K562 (cell line): ENCODE measurements at regions of chr12 and their contacts with region 1.

Region 1: GRCh38 chr12:75480469-75480949 is at the start of gene GLIPR1:
- DNase-seq: peak in 2 of 4 experiments; percentile 13 to 24
- ATAC-seq: peak; percentile 73
- H3K4me3 ChIP-seq: no peak within 1 kb of the TSS
- H3K27ac ChIP-seq: peak within 1 kb of the TSS; percentile 61; the same call in 2 of the 3 replicates
- H3K4me1 ChIP-seq: peaks cover 0 to 6% of the 10 kb centered on the region in 2 experiments; a peak in 4 of 5 replicates
- H3K27me3 ChIP-seq: no peaks in the 10 kb centered on the region
- CTCF ChIP-seq: no peak
- EP300 ChIP-seq: no peak
- POLR2A ChIP-seq: no peak
- RAD21 ChIP-seq: no peak
- polyA plus RNA-seq, gene GLIPR1: 2.0 to 2.1 TPM

Region 2: GRCh38 chr12:75334384-75335030 is 146.0 kb before region 1 on chr12 and contains the start of gene GLIPR1L1:
- CTCF ChIA-PET with region 1: no interaction called
- POLR2A ChIA-PET with region 1: no interaction called
- in situ Hi-C with region 1: loop called (anchors 10 kb)
- intact Hi-C with region 1: loop called (anchors 5 kb)
- DNase-seq: peak; percentile 26 to 79 (median 32)
- ATAC-seq: peak; percentile 77
- H3K4me3 ChIP-seq: no peak within 1 kb of the TSS
- H3K27ac ChIP-seq: no peak within 1 kb of the TSS
- H3K4me1 ChIP-seq: peaks cover 0 to 10% of the 10 kb centered on the region in 2 experiments; a peak in 2 of 5 replicates
- H3K27me3 ChIP-seq: no peaks in the 10 kb centered on the region
- CTCF ChIP-seq: peak; percentile 72 to 81 (median 76)
- EP300 ChIP-seq: no peak
- POLR2A ChIP-seq: no peak
- RAD21 ChIP-seq: peak; percentile 47 to 69
- polyA plus RNA-seq, gene GLIPR1L1: not detected

Region 3: GRCh38 chr12:75571204-75571603 is 90.7 kb after region 1 on chr12:
- CTCF ChIA-PET with region 1: no interaction called
- POLR2A ChIA-PET with region 1: no interaction called
- in situ Hi-C with region 1: no loop called
- intact Hi-C with region 1: no loop called
- DNase-seq: no peak
- ATAC-seq: no peak
- H3K4me3 ChIP-seq: no peak overlapping the region
- H3K27ac ChIP-seq: no peak overlapping the region
- H3K4me1 ChIP-seq: no peaks in the 10 kb centered on the region
- H3K27me3 ChIP-seq: no peaks in the 10 kb centered on the region
- CTCF ChIP-seq: no peak
- EP300 ChIP-seq: no peak
- POLR2A ChIP-seq: no peak
- RAD21 ChIP-seq: no peak

Region 4: DNA sequence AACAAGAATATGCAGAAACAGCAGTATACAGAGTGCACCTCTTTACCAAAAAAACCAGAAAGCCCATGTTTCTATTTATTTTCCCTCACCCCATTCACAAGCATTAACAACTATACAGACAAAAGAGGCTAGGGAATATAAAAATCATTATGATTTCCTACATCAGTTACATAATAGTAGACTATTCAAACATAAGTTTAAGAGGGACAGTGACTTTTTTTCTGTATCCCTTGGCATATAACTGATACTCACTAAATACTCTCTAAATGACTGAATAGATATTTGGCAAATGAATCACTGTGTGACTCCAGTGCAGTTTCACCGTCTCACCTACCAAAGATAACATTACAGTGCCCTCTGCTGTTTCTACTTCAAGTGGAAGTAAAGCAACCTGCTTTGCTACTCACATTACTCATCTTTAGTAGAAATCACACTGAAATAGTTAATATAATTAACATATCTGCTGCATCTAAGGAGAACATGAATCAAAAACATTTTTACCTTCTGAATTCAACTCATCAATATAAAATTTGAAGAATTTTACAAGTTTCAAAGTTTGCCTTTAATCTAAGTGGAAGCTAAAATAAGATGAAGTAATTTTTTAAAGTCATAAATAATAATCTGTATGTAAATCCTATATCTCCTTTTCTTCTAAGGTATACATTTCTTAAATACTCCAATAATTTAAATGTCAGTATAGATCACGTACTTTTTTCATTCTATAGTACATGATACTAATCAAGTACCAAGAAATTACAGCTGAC is 975.3 kb after region 1 on chr12:
- CTCF ChIA-PET with region 1: no interaction called
- POLR2A ChIA-PET with region 1: no interaction called
- in situ Hi-C with region 1: no loop called
- intact Hi-C with region 1: loop called (anchors 10 kb)
- DNase-seq: peak; percentile 14 to 66 (median 18)
- ATAC-seq: peak; percentile 94
- H3K4me3 ChIP-seq: no peak overlapping the region
- H3K27ac ChIP-seq: no peak overlapping the region
- H3K4me1 ChIP-seq: no peaks in the 10 kb centered on the region
- H3K27me3 ChIP-seq: no peaks in the 10 kb centered on the region
- CTCF ChIP-seq: peak; percentile 34 to 72 (median 51); a peak in 5 of 6 replicates
- EP300 ChIP-seq: no peak
- POLR2A ChIP-seq: 0 out of 2 replicates have a peak, but pooled peaks have one; percentile 27
- RAD21 ChIP-seq: peak; percentile 71 to 88